B cell (primary cell): ENCODE measurements at regions of chr18 and their contacts with region 1.

Region 1: GRCh38 chr18:57833443-57834101 is 30.5 kb upstream of the ATP8B1 start:
- DNase-seq: peak; percentile 57
- ATAC-seq: peak; percentile 34
- H3K4me3 ChIP-seq: peak overlapping the region; percentile 28 to 71 (median 43)
- H3K4me3 Mint-ChIP-seq: peak overlapping the region; percentile 85
- H3K27ac ChIP-seq: peak overlapping the region; percentile 57 to 77
- H3K27ac Mint-ChIP-seq: peak overlapping the region; percentile 83
- H3K4me1 ChIP-seq: peaks cover 24 to 31% of the 10 kb centered on the region in 2 donors
- H3K4me1 Mint-ChIP-seq: peaks cover 55% of the 10 kb centered on the region
- H3K27me3 ChIP-seq: no peaks in the 10 kb centered on the region
- H3K27me3 Mint-ChIP-seq: no peaks in the 10 kb centered on the region
- CTCF ChIP-seq: no peak

Region 2: GRCh38 chr18:56650944-56651770 is 1182.4 kb before region 1 on chr18 and contains the start of gene WDR7:
- CTCF ChIA-PET with region 1: no interaction called
- POLR2A ChIA-PET with region 1: no interaction called
- intact Hi-C with region 1: loop called (anchors 10 kb)
- DNase-seq: peak; percentile 97
- ATAC-seq: peak; percentile 93
- H3K4me3 ChIP-seq: peak within 1 kb of the TSS; percentile 67 to 95 (median 84)
- H3K4me3 Mint-ChIP-seq: peak within 1 kb of the TSS; percentile 92
- H3K27ac ChIP-seq: peak within 1 kb of the TSS; percentile 52 to 88
- H3K27ac Mint-ChIP-seq: peak within 1 kb of the TSS; percentile 88
- H3K4me1 ChIP-seq: peaks cover 19 to 26% of the 10 kb centered on the region in 2 donors
- H3K4me1 Mint-ChIP-seq: peaks cover 38% of the 10 kb centered on the region
- H3K27me3 ChIP-seq: no peaks in the 10 kb centered on the region
- H3K27me3 Mint-ChIP-seq: no peaks in the 10 kb centered on the region
- CTCF ChIP-seq: no peak
- total RNA-seq, gene WDR7: 45.0 and 48.0 TPM in 2 replicates

Region 3: GRCh38 chr18:57621246-57621604 is 212.3 kb before region 1 on chr18:
- CTCF ChIA-PET with region 1: interaction called, 4 read pairs
- POLR2A ChIA-PET with region 1: interaction called, 3 read pairs
- intact Hi-C with region 1: loop called (anchors 1 kb)
- DNase-seq: no peak
- ATAC-seq: peak; percentile 4
- H3K4me3 ChIP-seq: peak overlapping the region; percentile 85 to 90 (median 89)
- H3K4me3 Mint-ChIP-seq: peak overlapping the region; percentile 93
- H3K27ac ChIP-seq: peak overlapping the region; percentile 86 to 88
- H3K27ac Mint-ChIP-seq: peak overlapping the region; percentile 95
- H3K4me1 ChIP-seq: peaks cover 11 to 24% of the 10 kb centered on the region in 2 donors
- H3K4me1 Mint-ChIP-seq: peaks cover 32% of the 10 kb centered on the region
- H3K27me3 ChIP-seq: no peaks in the 10 kb centered on the region
- H3K27me3 Mint-ChIP-seq: no peaks in the 10 kb centered on the region
- CTCF ChIP-seq: no peak

Region 4: GRCh38 chr18:57630002-57630753 is 203.4 kb before region 1 on chr18:
- CTCF ChIA-PET with region 1: interaction called, 7 read pairs
- POLR2A ChIA-PET with region 1: no interaction called
- intact Hi-C with region 1: loop called (anchors 1 kb)
- DNase-seq: peak; percentile 95
- ATAC-seq: peak; percentile 93
- H3K4me3 ChIP-seq: peak overlapping the region; percentile 89 to 99 (median 98)
- H3K4me3 Mint-ChIP-seq: peak overlapping the region; percentile 97
- H3K27ac ChIP-seq: peak overlapping the region; percentile 82 to 85
- H3K27ac Mint-ChIP-seq: peak overlapping the region; percentile 98
- H3K4me1 ChIP-seq: peaks cover 12 to 13% of the 10 kb centered on the region in 2 donors
- H3K4me1 Mint-ChIP-seq: peaks cover 23% of the 10 kb centered on the region
- H3K27me3 ChIP-seq: no peaks in the 10 kb centered on the region
- H3K27me3 Mint-ChIP-seq: no peaks in the 10 kb centered on the region
- CTCF ChIP-seq: peak; percentile 77

Region 5: DNA sequence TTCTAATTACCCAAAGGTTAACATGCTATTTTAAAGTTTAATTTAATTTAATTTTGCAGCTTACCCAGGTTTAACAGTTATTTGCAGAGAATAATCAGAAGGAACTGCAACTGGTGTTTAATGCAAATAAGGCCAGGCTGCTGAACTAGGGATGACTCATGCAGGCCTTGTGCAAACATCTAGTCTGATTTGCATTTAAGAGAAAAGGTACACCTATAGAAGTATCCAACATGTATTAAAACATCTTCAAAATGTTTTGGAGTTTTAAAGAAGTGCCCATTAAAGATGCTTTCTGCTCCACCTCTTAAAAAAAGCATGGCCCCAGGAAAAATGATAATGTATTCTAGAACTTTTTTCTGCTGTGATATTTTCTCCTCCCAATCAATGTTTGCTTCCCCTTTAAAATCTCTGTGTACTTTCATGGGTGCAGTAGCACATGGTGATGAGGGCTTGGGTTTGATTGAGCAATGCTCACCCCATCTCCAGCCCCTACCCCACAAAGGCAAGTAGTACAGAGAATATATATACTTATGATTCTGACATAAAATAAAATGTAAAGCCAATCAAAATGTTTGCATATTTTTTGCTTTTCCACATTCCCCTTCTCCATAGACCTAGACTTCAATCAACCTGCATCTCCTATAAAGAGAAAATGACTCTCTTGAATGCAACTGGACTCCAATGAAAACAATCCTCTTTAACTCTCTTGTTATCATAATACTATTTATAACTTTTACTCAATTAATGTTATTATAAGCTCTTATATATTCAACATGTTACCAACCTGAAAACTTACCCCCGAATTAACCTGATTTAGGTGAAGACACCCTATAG is 84.6 kb before region 1 on chr18:
- CTCF ChIA-PET with region 1: no interaction called
- POLR2A ChIA-PET with region 1: no interaction called
- intact Hi-C with region 1: loop called (anchors 5 kb)
- DNase-seq: peak; percentile 35
- ATAC-seq: peak; percentile 92
- H3K4me3 ChIP-seq: no peak overlapping the region
- H3K4me3 Mint-ChIP-seq: peak overlapping the region; percentile 21
- H3K27ac ChIP-seq: peak overlapping the region; percentile 40 to 55
- H3K27ac Mint-ChIP-seq: peak overlapping the region; percentile 13
- H3K4me1 ChIP-seq: peaks cover 19 to 20% of the 10 kb centered on the region in 2 donors
- H3K4me1 Mint-ChIP-seq: peaks cover 41% of the 10 kb centered on the region
- H3K27me3 ChIP-seq: no peaks in the 10 kb centered on the region
- H3K27me3 Mint-ChIP-seq: no peaks in the 10 kb centered on the region
- CTCF ChIP-seq: no peak

Region 6: GRCh38 chr18:57803103-57803969 is 30.2 kb before region 1 on chr18 and contains the start of gene ATP8B1:
- CTCF ChIA-PET with region 1: no interaction called
- POLR2A ChIA-PET with region 1: no interaction called
- intact Hi-C with region 1: loop called (anchors 5 kb)
- DNase-seq: peak; percentile 40
- ATAC-seq: peak; percentile 62
- H3K4me3 ChIP-seq: peak within 1 kb of the TSS in 4 of 5 experiments; percentile 30 to 69 (median 54)
- H3K4me3 Mint-ChIP-seq: peak within 1 kb of the TSS; percentile 93
- H3K27ac ChIP-seq: no peak within 1 kb of the TSS
- H3K27ac Mint-ChIP-seq: peak within 1 kb of the TSS; percentile 37
- H3K4me1 ChIP-seq: peaks cover 23 to 25% of the 10 kb centered on the region in 2 donors
- H3K4me1 Mint-ChIP-seq: peaks cover 22% of the 10 kb centered on the region
- H3K27me3 ChIP-seq: peaks cover 0 to 38% (median 21%) of the 10 kb centered on the region in 4 experiments
- H3K27me3 Mint-ChIP-seq: peaks cover 40% of the 10 kb centered on the region
- CTCF ChIP-seq: no peak
- total RNA-seq, gene ATP8B1: 0.10 and 0.27 TPM in 2 replicates

Region 7: GRCh38 chr18:58297198-58297597 is 463.6 kb after region 1 on chr18:
- CTCF ChIA-PET with region 1: no interaction called
- POLR2A ChIA-PET with region 1: no interaction called
- intact Hi-C with region 1: no loop called
- DNase-seq: no peak
- ATAC-seq: no peak
- H3K4me3 ChIP-seq: no peak overlapping the region
- H3K4me3 Mint-ChIP-seq: no peak overlapping the region
- H3K27ac ChIP-seq: no peak overlapping the region
- H3K27ac Mint-ChIP-seq: no peak overlapping the region
- H3K4me1 ChIP-seq: no peaks in the 10 kb centered on the region
- H3K4me1 Mint-ChIP-seq: peaks cover 2% of the 10 kb centered on the region
- H3K27me3 ChIP-seq: no peaks in the 10 kb centered on the region
- H3K27me3 Mint-ChIP-seq: no peaks in the 10 kb centered on the region
- CTCF ChIP-seq: no peak

Region 8: DNA sequence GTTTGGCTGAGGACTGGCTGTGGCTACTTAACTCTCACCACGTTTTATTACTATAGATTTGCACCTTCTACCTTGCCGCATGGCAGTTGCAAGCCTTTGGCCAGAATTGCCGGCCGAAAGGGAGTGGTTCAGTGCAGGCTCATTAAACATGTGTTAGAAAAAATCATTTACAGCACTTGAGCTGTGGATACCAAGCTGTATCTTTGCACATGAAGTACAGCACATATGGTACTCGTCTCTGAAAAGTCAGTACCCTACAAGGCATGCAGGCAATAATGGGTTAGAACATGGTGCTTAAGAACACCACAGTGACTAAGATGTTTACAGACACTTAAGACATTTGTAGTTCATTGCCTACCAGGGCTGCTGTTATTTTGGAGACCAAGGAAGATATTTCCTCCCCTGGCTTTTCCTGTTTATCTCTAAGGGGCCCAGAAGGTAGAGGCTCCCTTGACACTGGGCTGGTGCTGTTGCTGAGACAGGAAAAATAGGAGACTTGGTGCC is 1134.2 kb after region 1 on chr18:
- CTCF ChIA-PET with region 1: no interaction called
- POLR2A ChIA-PET with region 1: no interaction called
- intact Hi-C with region 1: loop called (anchors 5 kb)
- DNase-seq: no peak
- ATAC-seq: no peak
- H3K4me3 ChIP-seq: no peak overlapping the region
- H3K4me3 Mint-ChIP-seq: peak overlapping the region; percentile 75
- H3K27ac ChIP-seq: peak overlapping the region; percentile 94 to 99
- H3K27ac Mint-ChIP-seq: peak overlapping the region; percentile 95
- H3K4me1 ChIP-seq: peaks cover 86 to 88% of the 10 kb centered on the region in 2 donors
- H3K4me1 Mint-ChIP-seq: peaks cover 86% of the 10 kb centered on the region
- H3K27me3 ChIP-seq: no peaks in the 10 kb centered on the region
- H3K27me3 Mint-ChIP-seq: no peaks in the 10 kb centered on the region
- CTCF ChIP-seq: no peak